Activated naive CD4-positive, alpha-beta T cell treated with anti-CD3 and anti-CD28 coated beads for 36 hours (primary cell): ENCODE measurements at regions of chr11 and their contacts with region 1.

Region 1: GRCh38 chr11:65961232-65961901 is at the start of gene SART1:
- DNase-seq: peak; percentile 98
- H3K4me3 Mint-ChIP-seq: peak within 1 kb of the TSS; percentile 95
- H3K27ac Mint-ChIP-seq: peak within 1 kb of the TSS; percentile 95
- H3K4me1 Mint-ChIP-seq: peaks cover 48% of the 10 kb centered on the region
- H3K27me3 Mint-ChIP-seq: no peaks in the 10 kb centered on the region
- total RNA-seq, gene SART1: 50.1 to 59.9 TPM

Region 2: DNA sequence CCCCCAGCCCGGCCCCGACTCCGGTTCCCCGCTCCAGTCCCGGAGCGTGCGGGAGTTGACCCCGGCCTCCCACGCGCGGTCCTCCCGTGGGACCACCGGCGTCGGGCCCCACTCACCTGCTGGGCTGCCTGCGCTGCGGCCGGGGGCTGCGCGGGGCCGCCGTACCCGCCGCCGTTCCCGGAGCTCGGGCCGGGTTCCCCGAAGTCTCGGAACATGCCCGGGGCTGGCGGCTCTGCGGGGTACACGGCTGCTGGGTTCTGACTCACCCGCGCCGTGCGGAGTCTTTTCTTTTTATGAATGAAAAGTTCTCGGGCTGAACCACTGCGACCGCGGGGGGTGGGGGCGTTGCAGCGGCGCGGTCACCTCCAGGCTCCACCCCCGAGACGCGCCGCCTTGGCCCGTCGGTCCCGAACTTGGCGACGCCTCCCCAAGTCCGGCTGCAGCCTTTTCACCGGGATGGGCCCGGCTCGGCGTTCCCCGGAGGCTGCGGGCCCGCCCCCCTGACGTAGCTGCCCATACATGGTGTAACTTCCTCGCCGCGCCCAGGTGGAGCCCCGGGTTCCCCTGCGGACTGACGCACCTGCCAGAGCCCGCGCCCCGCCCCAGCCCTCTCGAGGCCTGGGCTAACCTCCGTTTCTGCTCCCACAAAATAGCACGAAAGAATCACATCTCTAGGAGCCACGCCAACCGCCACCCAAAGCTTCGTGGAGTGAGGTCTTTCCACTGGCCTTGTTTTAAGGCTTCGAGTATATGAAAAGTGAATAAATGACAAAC is 61.1 kb before region 1 on chr11 and contains the start of gene FOSL1:
- CTCF ChIA-PET with region 1: no interaction called
- intact Hi-C with region 1: loop called (anchors 1 kb)
- DNase-seq: peak; percentile 96
- H3K4me3 Mint-ChIP-seq: peak within 1 kb of the TSS; percentile 83
- H3K27ac Mint-ChIP-seq: peak within 1 kb of the TSS; percentile 79
- H3K4me1 Mint-ChIP-seq: peaks cover 33% of the 10 kb centered on the region
- H3K27me3 Mint-ChIP-seq: peaks cover 2% of the 10 kb centered on the region
- total RNA-seq, gene FOSL1: 8.2 TPM

Region 3: GRCh38 chr11:65927904-65928397 is 33.4 kb before region 1 on chr11:
- CTCF ChIA-PET with region 1: no interaction called
- intact Hi-C with region 1: loop called (anchors 1 kb)
- DNase-seq: peak; percentile 91
- H3K4me3 Mint-ChIP-seq: peak overlapping the region; percentile 68
- H3K27ac Mint-ChIP-seq: peak overlapping the region; percentile 97
- H3K4me1 Mint-ChIP-seq: peaks cover 30% of the 10 kb centered on the region
- H3K27me3 Mint-ChIP-seq: no peaks in the 10 kb centered on the region